Activated naive CD4-positive, alpha-beta T cell treated with anti-CD3 and anti-CD28 coated beads for 36 hours (primary cell): ENCODE measurements at regions of chr2 and their contacts with region 1.

Region 1: DNA sequence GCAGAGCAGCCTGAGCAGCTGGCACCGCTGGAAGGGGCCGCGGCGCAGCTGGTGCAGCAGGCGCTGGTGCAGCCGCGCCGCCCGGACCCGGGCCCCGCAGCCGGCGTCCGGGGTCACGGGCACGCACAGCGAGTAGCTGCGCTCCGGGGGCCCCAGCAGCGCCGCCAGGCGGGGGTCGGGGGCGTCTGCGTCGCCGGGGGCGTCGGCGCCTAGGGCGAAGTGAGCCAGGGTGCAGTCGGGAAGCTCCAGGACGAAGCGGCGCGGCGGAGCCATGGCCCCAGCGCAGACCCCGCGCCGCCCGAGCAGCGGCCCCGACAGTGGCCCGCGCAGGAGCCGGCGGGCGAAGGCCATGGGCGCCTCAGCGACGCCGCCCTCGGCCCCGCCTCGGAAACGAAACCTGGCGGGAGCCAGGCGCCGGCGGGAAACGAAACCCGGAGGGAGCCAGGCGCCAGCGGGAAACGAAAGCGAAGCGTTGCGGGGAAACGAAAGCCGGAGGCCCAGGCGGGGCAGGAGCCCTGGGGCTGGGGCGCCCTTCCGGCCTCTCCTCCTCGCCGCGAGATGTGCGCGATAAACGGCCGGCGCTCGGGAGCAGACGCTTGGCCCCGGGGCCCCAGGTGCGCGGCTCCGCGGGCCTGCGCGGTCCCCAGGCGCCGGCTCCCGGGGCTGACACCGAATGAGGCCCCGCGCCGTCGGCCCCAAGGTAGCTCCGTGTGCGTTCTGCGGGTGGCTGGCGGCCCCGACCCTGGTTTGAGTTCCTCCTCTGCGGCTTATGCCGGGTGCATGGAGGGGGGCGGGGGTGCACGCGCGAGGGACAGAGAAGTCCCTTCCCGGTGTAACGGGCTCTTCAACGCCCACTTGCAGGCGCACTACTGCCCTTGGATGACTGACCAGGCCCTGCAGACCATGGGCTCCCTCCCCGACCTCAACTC is at the start of gene CMPK2:
- DNase-seq: peak; percentile 82
- H3K4me3 Mint-ChIP-seq: peak within 1 kb of the TSS; percentile 89
- H3K27ac Mint-ChIP-seq: peak within 1 kb of the TSS; percentile 77
- H3K4me1 Mint-ChIP-seq: peaks cover 17% of the 10 kb centered on the region
- H3K27me3 Mint-ChIP-seq: no peaks in the 10 kb centered on the region
- total RNA-seq, gene CMPK2: 7.2 to 7.7 TPM

Region 2: GRCh38 chr2:6780765-6781274 is 84.8 kb before region 1 on chr2:
- CTCF ChIA-PET with region 1: no interaction called
- intact Hi-C with region 1: loop called (anchors 5 kb)
- DNase-seq: peak; percentile 65
- H3K4me3 Mint-ChIP-seq: no peak overlapping the region
- H3K27ac Mint-ChIP-seq: no peak overlapping the region
- H3K4me1 Mint-ChIP-seq: peaks cover 9% of the 10 kb centered on the region
- H3K27me3 Mint-ChIP-seq: no peaks in the 10 kb centered on the region

Region 3: GRCh38 chr2:6835467-6835866 is 30.1 kb before region 1 on chr2:
- CTCF ChIA-PET with region 1: interaction called, 15 read pairs
- intact Hi-C with region 1: loop called (anchors 2 kb)
- DNase-seq: no peak
- H3K4me3 Mint-ChIP-seq: no peak overlapping the region
- H3K27ac Mint-ChIP-seq: peak overlapping the region; percentile 1
- H3K4me1 Mint-ChIP-seq: peaks cover 19% of the 10 kb centered on the region
- H3K27me3 Mint-ChIP-seq: no peaks in the 10 kb centered on the region

Region 4: DNA sequence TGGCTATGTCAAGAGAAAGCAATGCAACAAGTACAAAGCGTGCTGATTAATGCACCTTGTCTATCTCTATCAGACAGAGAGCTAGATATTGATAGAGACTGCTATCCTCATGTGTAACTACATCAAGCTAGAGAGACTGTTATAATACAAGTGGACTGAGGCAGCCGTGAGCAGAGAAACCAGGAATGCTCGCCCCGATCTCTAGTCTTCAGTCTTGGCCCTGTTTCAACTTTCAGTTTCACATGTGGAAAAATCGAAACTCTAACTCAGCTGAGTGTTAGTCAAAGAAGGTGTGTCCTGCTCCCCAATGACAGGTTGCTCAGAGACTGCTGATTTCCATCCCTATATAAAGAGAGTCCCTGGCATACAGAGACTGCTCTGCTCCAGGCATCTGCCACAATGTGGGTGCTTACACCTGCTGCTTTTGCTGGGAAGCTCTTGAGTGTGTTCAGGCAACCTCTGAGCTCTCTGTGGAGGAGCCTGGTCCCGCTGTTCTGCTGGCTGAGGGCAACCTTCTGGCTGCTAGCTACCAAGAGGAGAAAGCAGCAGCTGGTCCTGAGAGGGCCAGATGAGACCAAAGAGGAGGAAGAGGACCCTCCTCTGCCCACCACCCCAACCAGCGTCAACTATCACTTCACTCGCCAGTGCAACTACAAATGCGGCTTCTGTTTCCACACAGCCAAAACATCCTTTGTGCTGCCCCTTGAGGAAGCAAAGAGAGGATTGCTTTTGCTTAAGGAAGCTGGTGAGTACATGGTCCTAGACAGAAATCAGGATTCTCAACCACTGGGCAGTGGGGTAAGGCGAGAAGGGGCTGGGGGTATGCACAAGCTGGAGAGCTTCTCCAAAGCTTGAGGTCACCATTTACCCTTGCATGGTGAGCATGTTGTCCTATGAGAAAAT is 12.0 kb after region 1 on chr2 and contains the start of gene RSAD2:
- CTCF ChIA-PET with region 1: interaction called, 54 read pairs
- intact Hi-C with region 1: loop called (anchors 1 kb)
- DNase-seq: peak; percentile 45
- H3K4me3 Mint-ChIP-seq: peak within 1 kb of the TSS; percentile 68
- H3K27ac Mint-ChIP-seq: no peak within 1 kb of the TSS
- H3K4me1 Mint-ChIP-seq: peaks cover 66% of the 10 kb centered on the region
- H3K27me3 Mint-ChIP-seq: no peaks in the 10 kb centered on the region
- total RNA-seq, gene RSAD2: 9.1 to 9.9 TPM

Region 5: GRCh38 chr2:6917071-6917760 is 51.6 kb after region 1 on chr2 and contains the start of gene RNF144A:
- CTCF ChIA-PET with region 1: interaction called, 46 read pairs
- intact Hi-C with region 1: no loop called
- DNase-seq: peak; percentile 67
- H3K4me3 Mint-ChIP-seq: peak within 1 kb of the TSS; percentile 76
- H3K27ac Mint-ChIP-seq: peak within 1 kb of the TSS; percentile 85
- H3K4me1 Mint-ChIP-seq: peaks cover 75% of the 10 kb centered on the region
- H3K27me3 Mint-ChIP-seq: no peaks in the 10 kb centered on the region
- total RNA-seq, gene RNF144A: 49.0 to 50.6 TPM

Region 6: GRCh38 chr2:7026742-7027141 is 161.1 kb after region 1 on chr2:
- CTCF ChIA-PET with region 1: no interaction called
- intact Hi-C with region 1: no loop called
- DNase-seq: no peak
- H3K4me3 Mint-ChIP-seq: no peak overlapping the region
- H3K27ac Mint-ChIP-seq: no peak overlapping the region
- H3K4me1 Mint-ChIP-seq: peaks cover 5% of the 10 kb centered on the region
- H3K27me3 Mint-ChIP-seq: no peaks in the 10 kb centered on the region